Natural killer cell (primary cell): ENCODE measurements at regions of chr15 and their contacts with region 1.

Region 1: GRCh38 chr15:76973362-76973743 is 21.6 kb upstream of the PSTPIP1 start:
- DNase-seq: peak; percentile 66 to 86
- ATAC-seq: peak; percentile 68 to 82 (median 81)
- H3K4me3 ChIP-seq: no peak overlapping the region
- H3K4me3 Mint-ChIP-seq: no peak overlapping the region
- H3K27ac ChIP-seq: no peak overlapping the region
- H3K27ac Mint-ChIP-seq: no peak overlapping the region
- H3K4me1 ChIP-seq: peaks cover 23% of the 10 kb centered on the region
- H3K4me1 Mint-ChIP-seq: peaks cover 19 to 38% of the 10 kb centered on the region in 2 donors
- H3K27me3 ChIP-seq: no peaks in the 10 kb centered on the region
- H3K27me3 Mint-ChIP-seq: no peaks in the 10 kb centered on the region
- CTCF ChIP-seq: peak; percentile 82

Region 2: DNA sequence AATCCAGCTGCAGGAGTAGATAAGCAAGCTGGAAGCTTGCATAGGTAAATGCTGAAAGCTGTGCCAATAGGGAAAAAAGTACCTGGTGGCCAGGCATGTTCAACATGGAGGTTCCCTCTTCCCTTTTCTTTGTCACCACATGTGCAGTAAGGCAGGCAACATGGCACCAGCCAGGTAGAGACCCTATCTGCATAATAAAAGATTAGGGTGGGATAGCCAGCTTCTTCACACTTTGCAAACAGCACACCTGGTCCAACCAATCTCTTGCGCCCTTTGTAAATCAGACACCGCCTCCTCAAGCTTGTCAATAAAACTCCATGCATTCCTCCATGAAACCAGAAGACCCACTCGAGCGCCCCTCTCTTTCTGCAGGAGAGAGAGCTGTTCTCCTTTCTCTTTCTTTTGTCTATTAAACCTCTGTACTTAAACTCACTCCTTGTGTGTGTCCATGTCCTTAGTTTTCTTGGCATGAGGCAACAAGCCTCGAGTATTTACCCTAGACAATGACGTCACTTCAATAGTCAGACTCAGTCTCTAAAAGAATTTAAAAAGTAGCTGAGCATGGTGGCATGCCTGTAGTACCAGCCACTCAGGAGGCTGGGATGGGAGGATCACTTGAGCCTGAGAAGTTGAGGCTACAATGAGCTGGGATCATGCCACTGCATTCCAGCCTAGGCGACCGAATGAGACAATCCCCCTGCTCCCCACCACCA is 324.5 kb before region 1 on chr15:
- intact Hi-C with region 1: no loop called
- DNase-seq: no peak
- ATAC-seq: no peak
- H3K4me3 ChIP-seq: no peak overlapping the region
- H3K4me3 Mint-ChIP-seq: no peak overlapping the region
- H3K27ac ChIP-seq: no peak overlapping the region
- H3K27ac Mint-ChIP-seq: no peak overlapping the region
- H3K4me1 ChIP-seq: no peaks in the 10 kb centered on the region
- H3K4me1 Mint-ChIP-seq: peaks cover 6 to 10% of the 10 kb centered on the region in 2 donors
- H3K27me3 ChIP-seq: no peaks in the 10 kb centered on the region
- H3K27me3 Mint-ChIP-seq: no peaks in the 10 kb centered on the region
- CTCF ChIP-seq: no peak

Region 3: DNA sequence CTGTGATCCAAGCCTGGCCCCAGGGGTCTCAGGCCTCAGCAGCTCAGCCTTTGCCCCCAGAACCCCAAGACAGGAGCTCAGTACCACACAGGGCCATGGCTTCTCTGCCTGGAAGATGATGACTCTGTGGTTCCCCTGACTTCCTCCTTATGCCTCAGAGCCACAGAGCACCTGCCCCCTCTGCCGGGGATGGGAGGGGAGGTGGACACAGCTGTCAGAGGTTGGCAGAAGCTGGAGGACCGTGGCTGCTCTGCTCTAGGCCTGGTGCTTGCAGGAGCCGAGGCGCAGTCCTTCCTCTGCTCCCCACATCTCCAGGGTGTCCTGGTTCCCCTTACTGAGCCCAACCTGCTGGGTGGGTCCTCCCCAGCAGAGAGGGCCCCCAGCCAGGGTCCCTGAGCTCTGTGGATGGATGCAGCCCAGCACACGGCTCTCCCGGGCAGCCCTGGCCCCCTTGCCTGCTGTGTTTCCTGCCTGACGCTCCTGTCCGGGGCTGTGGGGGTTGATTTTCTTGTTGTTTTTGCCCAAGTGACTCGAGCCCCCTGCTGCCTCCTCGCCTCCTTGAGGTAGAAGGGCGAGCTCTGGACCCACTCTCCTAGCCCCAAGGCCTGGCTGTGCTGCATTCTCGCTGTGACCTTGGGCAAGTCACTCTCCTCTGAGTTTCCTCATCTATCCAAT is 58.2 kb after region 1 on chr15:
- intact Hi-C with region 1: loop called (anchors 1 kb)
- DNase-seq: peak; percentile 27 to 56
- ATAC-seq: peak in 2 of 3 donors; percentile 65 to 86
- H3K4me3 ChIP-seq: no peak overlapping the region
- H3K4me3 Mint-ChIP-seq: no peak overlapping the region
- H3K27ac ChIP-seq: no peak overlapping the region
- H3K27ac Mint-ChIP-seq: peak overlapping the region; percentile 64 to 71
- H3K4me1 ChIP-seq: peaks cover 32% of the 10 kb centered on the region
- H3K4me1 Mint-ChIP-seq: peaks cover 5 to 36% of the 10 kb centered on the region in 2 donors
- H3K27me3 ChIP-seq: no peaks in the 10 kb centered on the region
- H3K27me3 Mint-ChIP-seq: no peaks in the 10 kb centered on the region
- CTCF ChIP-seq: no peak

Region 4: GRCh38 chr15:77070495-77071304 is 97.3 kb after region 1 on chr15 and contains the start of gene TSPAN3:
- intact Hi-C with region 1: loop called (anchors 5 kb)
- DNase-seq: peak; percentile 88 to 95
- ATAC-seq: peak; percentile 97 to 98 (median 97)
- H3K4me3 ChIP-seq: peak within 1 kb of the TSS; percentile 64
- H3K4me3 Mint-ChIP-seq: peak within 1 kb of the TSS; percentile 88
- H3K27ac ChIP-seq: peak within 1 kb of the TSS; percentile 66
- H3K27ac Mint-ChIP-seq: peak within 1 kb of the TSS; percentile 65 to 90
- H3K4me1 ChIP-seq: peaks cover 16% of the 10 kb centered on the region
- H3K4me1 Mint-ChIP-seq: peaks cover 39 to 40% of the 10 kb centered on the region in 2 donors
- H3K27me3 ChIP-seq: no peaks in the 10 kb centered on the region
- H3K27me3 Mint-ChIP-seq: no peaks in the 10 kb centered on the region
- CTCF ChIP-seq: no peak
- total RNA-seq, gene TSPAN3: 18.7 to 37.4 (median 29.9) TPM

Region 5: GRCh38 chr15:77496710-77497103 is 523.4 kb after region 1 on chr15:
- intact Hi-C with region 1: loop called (anchors 1 kb)
- DNase-seq: peak; percentile 72 to 81
- ATAC-seq: peak; percentile 80 to 94 (median 92)
- H3K4me3 ChIP-seq: no peak overlapping the region
- H3K4me3 Mint-ChIP-seq: no peak overlapping the region
- H3K27ac ChIP-seq: no peak overlapping the region
- H3K27ac Mint-ChIP-seq: no peak overlapping the region
- H3K4me1 ChIP-seq: peaks cover 17% of the 10 kb centered on the region
- H3K4me1 Mint-ChIP-seq: peaks cover 10 to 17% of the 10 kb centered on the region in 2 donors
- H3K27me3 ChIP-seq: no peaks in the 10 kb centered on the region
- H3K27me3 Mint-ChIP-seq: no peaks in the 10 kb centered on the region
- CTCF ChIP-seq: peak; percentile 96

Region 6: DNA sequence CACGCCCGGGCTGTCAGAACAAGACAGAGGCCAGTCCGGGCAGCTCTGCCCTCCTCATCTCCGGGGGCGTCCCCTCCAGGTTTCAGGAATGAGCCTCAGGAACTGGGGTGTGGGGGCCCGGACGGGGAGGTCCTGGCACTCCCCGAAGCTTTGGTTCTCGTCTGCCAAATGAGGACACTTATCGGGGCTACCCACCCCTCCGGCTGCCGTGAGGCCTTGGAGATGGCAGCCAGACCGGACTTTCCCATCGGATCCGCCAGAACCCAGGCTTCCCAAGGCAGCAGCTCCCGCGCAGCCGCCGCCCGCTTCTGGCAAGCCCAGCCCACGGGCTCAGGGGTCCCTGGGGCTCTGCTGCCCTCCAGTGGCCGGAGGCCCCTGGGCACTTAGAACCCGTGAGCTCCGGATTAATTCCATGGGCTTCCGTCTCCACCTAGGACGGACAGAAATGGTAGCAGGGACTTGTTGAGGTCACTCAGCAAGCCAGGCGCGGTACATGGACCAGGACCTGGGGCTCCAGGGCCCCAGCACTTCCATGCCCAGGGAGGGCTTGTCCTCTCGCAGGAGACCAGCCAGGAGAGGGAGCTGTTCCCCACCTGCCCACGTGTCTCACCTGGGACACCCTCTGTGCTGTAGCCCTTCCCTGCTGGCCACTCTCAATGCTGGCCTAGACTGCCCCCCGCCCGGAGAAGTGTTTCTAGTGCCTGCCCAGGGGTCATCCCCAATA is 570.0 kb after region 1 on chr15:
- intact Hi-C with region 1: loop called (anchors 5 kb)
- DNase-seq: peak; percentile 75 to 85
- ATAC-seq: peak; percentile 86 to 99 (median 97)
- H3K4me3 ChIP-seq: peak overlapping the region; percentile 58
- H3K4me3 Mint-ChIP-seq: peak overlapping the region; percentile 89
- H3K27ac ChIP-seq: no peak overlapping the region
- H3K27ac Mint-ChIP-seq: peak overlapping the region; percentile 34 to 77
- H3K4me1 ChIP-seq: peaks cover 14% of the 10 kb centered on the region
- H3K4me1 Mint-ChIP-seq: peaks cover 0 to 8% of the 10 kb centered on the region in 2 donors
- H3K27me3 ChIP-seq: no peaks in the 10 kb centered on the region
- H3K27me3 Mint-ChIP-seq: no peaks in the 10 kb centered on the region
- CTCF ChIP-seq: peak; percentile 90